CD4-positive, alpha-beta T cell (primary cell): ENCODE measurements at regions of chr3 and their contacts with region 1.

Region 1: GRCh38 chr3:33074217-33075067 is 22.5 kb downstream of the GLB1 start:
- DNase-seq: peak; percentile 59 to 85 (median 64)
- ATAC-seq: peak; percentile 81
- H3K4me3 ChIP-seq: no peak overlapping the region
- H3K4me3 Mint-ChIP-seq: no peak overlapping the region
- H3K27ac ChIP-seq: no peak overlapping the region
- H3K27ac Mint-ChIP-seq: no peak overlapping the region
- H3K4me1 ChIP-seq: peaks cover 8% of the 10 kb centered on the region
- H3K4me1 Mint-ChIP-seq: peaks cover 44% of the 10 kb centered on the region
- H3K27me3 ChIP-seq: no peaks in the 10 kb centered on the region
- H3K27me3 Mint-ChIP-seq: no peaks in the 10 kb centered on the region
- CTCF ChIP-seq: peak; percentile 81

Region 2: DNA sequence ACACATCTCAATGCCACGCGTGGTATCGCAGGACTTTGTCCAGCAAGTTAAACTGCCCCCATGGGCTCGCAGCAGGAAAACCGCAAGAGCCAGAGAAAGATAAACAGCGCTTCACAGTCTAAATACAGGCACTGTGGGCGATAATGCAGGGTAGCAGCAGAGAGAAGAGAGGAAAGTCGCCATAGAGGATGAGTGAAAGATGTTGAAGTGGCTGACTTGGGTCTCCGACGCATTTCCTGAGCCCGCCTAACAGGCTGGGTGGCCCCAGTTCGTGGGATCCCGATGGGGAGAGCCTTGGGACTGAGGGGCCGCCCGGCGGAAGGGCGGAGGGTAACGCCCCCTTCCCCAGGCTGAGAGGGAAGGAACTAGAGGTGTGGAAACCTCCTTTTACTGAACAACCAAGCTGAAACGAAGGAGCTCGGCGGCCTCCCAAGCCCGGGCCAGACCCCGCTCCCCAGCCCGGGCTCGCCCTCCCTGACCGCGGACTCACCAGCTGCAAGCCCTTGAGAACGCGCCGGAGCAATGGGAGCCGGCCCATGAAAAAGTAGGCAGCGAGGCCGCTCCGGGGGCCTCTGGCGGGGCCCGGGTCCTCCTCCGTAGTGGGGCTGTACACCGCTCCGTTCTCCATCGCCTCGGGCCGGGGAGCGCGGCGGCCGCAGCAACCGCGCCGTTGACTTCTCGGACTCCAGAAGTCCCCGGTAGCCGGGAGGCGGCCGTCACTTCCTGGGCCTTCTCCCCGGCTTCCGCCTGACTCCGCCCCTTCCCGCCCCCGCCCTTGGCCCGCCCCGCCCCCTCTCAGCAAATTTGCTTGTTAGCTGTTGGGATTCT is 572.1 kb before region 1 on chr3 and contains the start of gene CMTM6:
- CTCF ChIA-PET with region 1: no interaction called
- POLR2A ChIA-PET with region 1: no interaction called
- intact Hi-C with region 1: loop called in 1 of 2 experiments (anchors 10 kb)
- DNase-seq: peak; percentile 54 to 90 (median 67)
- ATAC-seq: peak; percentile 78
- H3K4me3 ChIP-seq: peak within 1 kb of the TSS; percentile 79
- H3K4me3 Mint-ChIP-seq: peak within 1 kb of the TSS; percentile 92
- H3K27ac ChIP-seq: peak within 1 kb of the TSS; percentile 88 to 92
- H3K27ac Mint-ChIP-seq: peak within 1 kb of the TSS; percentile 83
- H3K4me1 ChIP-seq: peaks cover 15% of the 10 kb centered on the region
- H3K4me1 Mint-ChIP-seq: peaks cover 43% of the 10 kb centered on the region
- H3K27me3 ChIP-seq: no peaks in the 10 kb centered on the region
- H3K27me3 Mint-ChIP-seq: no peaks in the 10 kb centered on the region
- CTCF ChIP-seq: no peak
- total RNA-seq, gene CMTM6: 36.5 to 37.8 TPM

Region 3: GRCh38 chr3:33016851-33017405 is 57.5 kb before region 1 on chr3:
- CTCF ChIA-PET with region 1: no interaction called
- POLR2A ChIA-PET with region 1: interaction called, 3 read pairs
- intact Hi-C with region 1: loop called in 1 of 2 experiments (anchors 2 kb)
- DNase-seq: no peak
- ATAC-seq: no peak
- H3K4me3 ChIP-seq: no peak overlapping the region
- H3K4me3 Mint-ChIP-seq: peak overlapping the region; percentile 44
- H3K27ac ChIP-seq: peak overlapping the region in 1 of 2 donors; percentile 31
- H3K27ac Mint-ChIP-seq: peak overlapping the region; percentile 74
- H3K4me1 ChIP-seq: peaks cover 38% of the 10 kb centered on the region
- H3K4me1 Mint-ChIP-seq: peaks cover 61% of the 10 kb centered on the region
- H3K27me3 ChIP-seq: no peaks in the 10 kb centered on the region
- H3K27me3 Mint-ChIP-seq: no peaks in the 10 kb centered on the region
- CTCF ChIP-seq: no peak

Region 4: GRCh38 chr3:33023172-33024136 is 51.0 kb before region 1 on chr3:
- CTCF ChIA-PET with region 1: interaction called, 5 read pairs
- POLR2A ChIA-PET with region 1: interaction called, 3 read pairs
- intact Hi-C with region 1: loop called (anchors 1 to 2 kb)
- DNase-seq: peak in 3 of 14 experiments; percentile 63 to 70 (median 68)
- ATAC-seq: peak; percentile 93
- H3K4me3 ChIP-seq: no peak overlapping the region
- H3K4me3 Mint-ChIP-seq: peak overlapping the region; percentile 56
- H3K27ac ChIP-seq: peak overlapping the region in 1 of 2 donors; percentile 0
- H3K27ac Mint-ChIP-seq: peak overlapping the region; percentile 91
- H3K4me1 ChIP-seq: peaks cover 26% of the 10 kb centered on the region
- H3K4me1 Mint-ChIP-seq: peaks cover 63% of the 10 kb centered on the region
- H3K27me3 ChIP-seq: no peaks in the 10 kb centered on the region
- H3K27me3 Mint-ChIP-seq: no peaks in the 10 kb centered on the region
- CTCF ChIP-seq: peak; percentile 23

Region 5: DNA sequence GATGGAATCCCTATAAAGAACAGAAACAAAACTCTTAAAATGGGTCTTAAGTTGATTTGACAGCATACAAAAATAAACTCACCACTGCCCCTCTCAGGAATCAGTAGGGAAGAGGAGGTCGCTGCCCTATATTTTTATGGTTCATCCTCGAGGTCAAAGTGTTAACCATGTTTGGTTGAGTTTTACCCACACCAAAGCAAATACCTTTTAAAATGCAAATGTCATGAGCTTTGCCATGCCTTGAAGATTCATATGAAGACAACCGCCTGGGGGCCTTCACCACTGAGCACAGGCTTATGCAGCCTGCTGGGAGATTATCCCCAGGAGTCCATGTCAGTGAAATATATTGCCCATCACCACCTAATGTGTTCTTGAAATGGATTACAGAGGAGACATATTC is 43.6 kb before region 1 on chr3:
- CTCF ChIA-PET with region 1: interaction called, 14 read pairs
- POLR2A ChIA-PET with region 1: no interaction called
- intact Hi-C with region 1: no loop called
- DNase-seq: peak in 6 of 14 experiments; percentile 16 to 77 (median 58)
- ATAC-seq: peak; percentile 79
- H3K4me3 ChIP-seq: no peak overlapping the region
- H3K4me3 Mint-ChIP-seq: no peak overlapping the region
- H3K27ac ChIP-seq: no peak overlapping the region
- H3K27ac Mint-ChIP-seq: peak overlapping the region; percentile 50
- H3K4me1 ChIP-seq: peaks cover 18% of the 10 kb centered on the region
- H3K4me1 Mint-ChIP-seq: peaks cover 25% of the 10 kb centered on the region
- H3K27me3 ChIP-seq: no peaks in the 10 kb centered on the region
- H3K27me3 Mint-ChIP-seq: no peaks in the 10 kb centered on the region
- CTCF ChIP-seq: peak; percentile 33

Region 6: GRCh38 chr3:33063651-33064051 is 10.8 kb before region 1 on chr3:
- CTCF ChIA-PET with region 1: interaction called, 23 read pairs
- POLR2A ChIA-PET with region 1: interaction called, 3 read pairs
- intact Hi-C with region 1: no loop called
- DNase-seq: peak in 11 of 14 experiments; percentile 37 to 70 (median 51)
- ATAC-seq: peak; percentile 41
- H3K4me3 ChIP-seq: no peak overlapping the region
- H3K4me3 Mint-ChIP-seq: peak overlapping the region; percentile 69
- H3K27ac ChIP-seq: peak overlapping the region; percentile 27 to 41
- H3K27ac Mint-ChIP-seq: peak overlapping the region; percentile 94
- H3K4me1 ChIP-seq: peaks cover 63% of the 10 kb centered on the region
- H3K4me1 Mint-ChIP-seq: peaks cover 68% of the 10 kb centered on the region
- H3K27me3 ChIP-seq: no peaks in the 10 kb centered on the region
- H3K27me3 Mint-ChIP-seq: no peaks in the 10 kb centered on the region
- CTCF ChIP-seq: no peak

Region 7: GRCh38 chr3:33331414-33331813 is 257.0 kb after region 1 on chr3:
- CTCF ChIA-PET with region 1: no interaction called
- POLR2A ChIA-PET with region 1: no interaction called
- intact Hi-C with region 1: no loop called
- DNase-seq: no peak
- ATAC-seq: no peak
- H3K4me3 ChIP-seq: no peak overlapping the region
- H3K4me3 Mint-ChIP-seq: no peak overlapping the region
- H3K27ac ChIP-seq: no peak overlapping the region
- H3K27ac Mint-ChIP-seq: no peak overlapping the region
- H3K4me1 ChIP-seq: no peaks in the 10 kb centered on the region
- H3K4me1 Mint-ChIP-seq: no peaks in the 10 kb centered on the region
- H3K27me3 ChIP-seq: peaks cover 0 to 2% of the 10 kb centered on the region in 2 experiments
- H3K27me3 Mint-ChIP-seq: peaks cover 5% of the 10 kb centered on the region
- CTCF ChIP-seq: no peak

Region 8: GRCh38 chr3:33372218-33373081 is 298.0 kb after region 1 on chr3:
- CTCF ChIA-PET with region 1: no interaction called
- POLR2A ChIA-PET with region 1: no interaction called
- intact Hi-C with region 1: loop called in 1 of 2 experiments (anchors 5 kb)
- DNase-seq: peak; percentile 6 to 67 (median 28)
- ATAC-seq: peak; percentile 75
- H3K4me3 ChIP-seq: no peak overlapping the region
- H3K4me3 Mint-ChIP-seq: no peak overlapping the region
- H3K27ac ChIP-seq: no peak overlapping the region
- H3K27ac Mint-ChIP-seq: no peak overlapping the region
- H3K4me1 ChIP-seq: peaks cover 5% of the 10 kb centered on the region
- H3K4me1 Mint-ChIP-seq: peaks cover 5% of the 10 kb centered on the region
- H3K27me3 ChIP-seq: no peaks in the 10 kb centered on the region
- H3K27me3 Mint-ChIP-seq: peaks cover 16% of the 10 kb centered on the region
- CTCF ChIP-seq: peak; percentile 91

Region 9: DNA sequence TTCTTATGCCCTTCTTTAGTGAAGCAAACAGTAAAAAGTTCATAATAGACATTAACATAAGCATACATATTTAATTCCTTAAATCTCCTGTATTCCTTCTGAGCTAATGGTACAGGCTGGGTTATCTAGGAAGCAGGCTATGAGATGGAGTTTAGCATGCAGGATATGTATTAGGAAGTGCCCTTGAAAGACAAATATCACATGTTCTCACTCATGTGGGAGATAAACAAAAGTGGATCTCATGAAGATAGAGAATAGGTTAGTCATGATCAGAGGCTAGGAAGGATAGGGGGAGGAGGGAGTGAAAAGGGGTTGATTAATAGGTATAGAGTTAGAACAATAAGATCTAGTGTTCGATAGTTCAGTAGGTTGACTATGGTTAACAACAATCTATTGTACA is 538.2 kb after region 1 on chr3:
- CTCF ChIA-PET with region 1: no interaction called
- POLR2A ChIA-PET with region 1: no interaction called
- intact Hi-C with region 1: no loop called
- DNase-seq: no peak
- ATAC-seq: no peak
- H3K4me3 ChIP-seq: no peak overlapping the region
- H3K4me3 Mint-ChIP-seq: no peak overlapping the region
- H3K27ac ChIP-seq: no peak overlapping the region
- H3K27ac Mint-ChIP-seq: no peak overlapping the region
- H3K4me1 ChIP-seq: no peaks in the 10 kb centered on the region
- H3K4me1 Mint-ChIP-seq: no peaks in the 10 kb centered on the region
- H3K27me3 ChIP-seq: no peaks in the 10 kb centered on the region
- H3K27me3 Mint-ChIP-seq: no peaks in the 10 kb centered on the region
- CTCF ChIP-seq: no peak